ENCODE measurements at regions of chr9 and their contacts with region 1.

Region 1: DNA sequence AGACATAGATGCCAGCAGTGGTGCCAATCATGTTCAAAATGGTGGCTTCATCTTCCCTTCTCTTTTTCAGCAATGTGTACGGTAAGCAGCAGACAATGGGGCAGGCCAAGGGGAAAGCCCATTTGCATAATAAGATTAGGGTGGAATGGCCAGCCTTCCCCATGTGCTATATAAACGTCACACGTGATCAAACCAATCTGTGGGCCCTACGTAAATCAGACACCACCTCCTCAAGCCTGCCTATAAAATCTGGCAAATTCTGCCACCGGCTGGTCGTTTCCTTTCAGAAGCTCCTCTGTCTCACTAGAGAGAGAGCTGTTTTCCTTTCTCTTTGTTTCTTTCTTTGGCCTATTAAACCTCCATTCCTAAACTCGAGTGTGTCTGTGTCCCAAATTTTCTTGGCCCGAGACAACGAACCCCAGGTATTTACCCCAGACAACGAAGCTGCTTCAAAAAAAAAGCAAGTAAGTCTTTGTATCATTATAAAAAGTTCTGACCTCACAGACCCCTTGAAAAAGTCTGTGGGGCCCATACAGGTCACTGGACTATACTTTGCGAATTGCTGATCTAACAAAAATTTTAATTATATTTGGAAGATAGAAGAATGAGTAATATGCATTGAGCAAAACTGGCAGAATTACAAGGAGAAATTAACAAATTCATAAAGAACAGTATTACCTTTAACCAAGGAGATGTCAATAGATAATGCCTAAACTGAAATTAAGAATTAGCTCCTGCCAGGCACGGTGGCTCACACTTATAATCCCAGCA is 15.2 kb downstream of the ZBTB5 start:
- DNase-seq: no peak
- ATAC-seq: no peak
- H3K4me3 ChIP-seq: no peak overlapping the region
- H3K27ac ChIP-seq: no peak overlapping the region
- H3K4me1 ChIP-seq: peaks cover 40% of the 10 kb centered on the region
- H3K27me3 ChIP-seq: no peaks in the 10 kb centered on the region
- CTCF ChIP-seq: no peak

Region 2: GRCh38 chr9:37105234-37105633 is 344.8 kb before region 1 on chr9:
- CTCF ChIA-PET with region 1: no interaction called
- POLR2A ChIA-PET with region 1: no interaction called
- intact Hi-C with region 1: no loop called
- DNase-seq: no peak
- ATAC-seq: no peak
- H3K4me3 ChIP-seq: no peak overlapping the region
- H3K27ac ChIP-seq: no peak overlapping the region
- H3K4me1 ChIP-seq: peaks cover 2% of the 10 kb centered on the region; the same call in 1 of the 2 replicates
- H3K27me3 ChIP-seq: no peaks in the 10 kb centered on the region
- CTCF ChIP-seq: no peak

Region 3: GRCh38 chr9:37410969-37411785 is 38.9 kb before region 1 on chr9:
- CTCF ChIA-PET with region 1: no interaction called
- POLR2A ChIA-PET with region 1: interaction called, 12 read pairs
- intact Hi-C with region 1: no loop called
- DNase-seq: no peak
- ATAC-seq: peak; percentile 19; the same call in 1 of the 2 replicates
- H3K4me3 ChIP-seq: no peak overlapping the region
- H3K27ac ChIP-seq: no peak overlapping the region
- H3K4me1 ChIP-seq: no peaks in the 10 kb centered on the region
- H3K27me3 ChIP-seq: no peaks in the 10 kb centered on the region
- CTCF ChIP-seq: peak; percentile 49

Measured in PC-3 (cell line).